RWPE1 (cell line): ENCODE measurements at regions of chr17 and their contacts with region 1.

Region 1: DNA sequence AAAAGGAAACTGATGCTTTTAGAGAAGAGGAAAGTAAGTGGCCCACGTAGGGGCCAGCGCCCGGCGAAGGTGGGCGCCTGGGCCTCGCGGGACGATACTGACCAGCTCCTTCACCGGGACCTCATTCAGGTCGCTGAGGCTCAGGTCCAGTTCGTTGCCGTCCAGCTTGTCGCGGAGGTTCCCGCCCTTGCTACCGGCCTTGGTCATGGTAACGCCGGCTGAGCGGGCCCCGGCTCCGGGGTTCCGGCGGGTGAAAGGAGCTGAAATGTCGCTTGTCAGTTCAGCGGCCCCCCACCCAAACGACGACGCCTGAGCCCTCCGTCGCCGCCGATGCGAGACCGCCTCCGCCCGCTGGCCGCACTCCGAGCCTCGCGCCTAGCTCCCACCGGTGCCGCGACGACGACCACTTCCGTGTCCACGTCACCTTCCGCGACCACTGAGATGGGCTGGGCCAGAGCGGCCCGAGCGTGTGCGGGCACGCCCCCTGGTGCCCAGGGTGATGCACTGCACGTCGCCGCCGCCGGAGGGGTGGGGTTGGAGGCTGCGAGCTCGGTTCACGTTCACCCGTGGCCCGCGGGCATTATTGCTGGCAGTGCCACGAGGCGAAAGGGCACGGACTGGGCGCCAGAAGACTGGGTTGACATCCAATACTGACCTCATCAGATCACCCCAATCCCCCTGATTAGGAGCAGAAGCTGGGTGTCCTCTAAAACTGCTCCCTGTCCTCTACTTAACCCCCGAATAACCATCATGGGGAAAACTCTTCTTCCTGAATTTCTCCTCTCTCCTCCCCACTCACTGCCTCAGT is at the start of gene LRRC59:
- DNase-seq: peak; percentile 86
- H3K27ac ChIP-seq: peak within 1 kb of the TSS; percentile 86
- CTCF ChIP-seq: peak; percentile 99

Region 2: GRCh38 chr17:50361561-50362480 is 35.5 kb before region 1 on chr17:
- CTCF ChIA-PET with region 1: interaction called, 10 read pairs
- POLR2A ChIA-PET with region 1: no interaction called
- DNase-seq: no peak
- H3K27ac ChIP-seq: peak overlapping the region; percentile 50
- CTCF ChIP-seq: peak; percentile 51

Region 3: GRCh38 chr17:50425682-50426471 is 28.6 kb after region 1 on chr17 and contains the start of gene ACSF2:
- CTCF ChIA-PET with region 1: interaction called, 16 read pairs
- POLR2A ChIA-PET with region 1: interaction called, 4 read pairs
- DNase-seq: peak; percentile 87
- H3K27ac ChIP-seq: peak within 1 kb of the TSS; percentile 85
- CTCF ChIP-seq: no peak